ENCODE measurements at regions of chr11 and their contacts with region 1.

Region 1: GRCh38 chr11:363948-364761 is 5.1 kb upstream of the B4GALNT4 start:
- DNase-seq: peak; percentile 75
- H3K4me3 ChIP-seq: no peak overlapping the region
- H3K27ac ChIP-seq: no peak overlapping the region
- H3K4me1 ChIP-seq: no peaks in the 10 kb centered on the region
- H3K27me3 ChIP-seq: peaks cover 11% of the 10 kb centered on the region
- CTCF ChIP-seq: peak; percentile 45

Region 2: GRCh38 chr11:236774-237767 is 127.1 kb before region 1 on chr11 and contains the start of gene PSMD13:
- intact Hi-C with region 1: loop called (anchors 5 kb)
- DNase-seq: peak; percentile 87
- H3K4me3 ChIP-seq: peak within 1 kb of the TSS; percentile 96
- H3K27ac ChIP-seq: peak within 1 kb of the TSS; percentile 95
- H3K4me1 ChIP-seq: peaks cover 7% of the 10 kb centered on the region
- H3K27me3 ChIP-seq: no peaks in the 10 kb centered on the region
- CTCF ChIP-seq: no peak
- total RNA-seq, gene PSMD13: 99.0 to 145 TPM

Region 3: DNA sequence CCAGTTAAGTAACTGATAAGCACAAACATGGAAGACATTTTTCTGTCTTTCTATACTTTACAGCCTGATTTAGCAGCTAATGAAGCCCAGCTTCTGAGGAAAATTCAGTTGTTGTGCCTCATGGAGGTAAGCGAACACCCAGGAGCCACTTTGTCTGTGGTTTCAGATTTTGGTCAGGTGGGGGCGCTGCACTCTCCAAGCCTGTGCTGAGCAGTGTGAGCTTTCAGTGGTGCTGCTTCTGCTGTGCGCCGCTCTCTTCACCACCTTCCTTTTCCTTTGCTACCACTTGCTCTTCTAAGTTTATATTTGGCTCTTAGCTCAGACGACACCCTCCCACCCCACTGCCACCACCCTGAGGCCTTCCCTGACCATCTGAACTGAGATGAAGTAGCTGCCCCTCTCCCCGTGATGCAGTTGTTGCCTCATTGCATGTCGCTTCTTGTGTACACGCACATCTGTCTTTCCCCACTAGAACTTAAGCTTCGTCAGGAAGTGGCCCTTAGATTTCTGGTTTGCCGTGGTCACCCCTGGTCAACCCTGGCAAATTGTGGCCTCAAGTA is 113.3 kb before region 1 on chr11:
- intact Hi-C with region 1: loop called (anchors 5 kb)
- DNase-seq: peak; percentile 64
- H3K4me3 ChIP-seq: no peak overlapping the region
- H3K27ac ChIP-seq: no peak overlapping the region
- H3K4me1 ChIP-seq: no peaks in the 10 kb centered on the region
- H3K27me3 ChIP-seq: no peaks in the 10 kb centered on the region
- CTCF ChIP-seq: peak; percentile 60

Region 4: GRCh38 chr11:416757-417621 is 52.8 kb after region 1 on chr11:
- intact Hi-C with region 1: no loop called
- DNase-seq: peak; percentile 78
- H3K4me3 ChIP-seq: peak overlapping the region; percentile 70
- H3K27ac ChIP-seq: peak overlapping the region; percentile 90
- H3K4me1 ChIP-seq: peaks cover 5% of the 10 kb centered on the region
- H3K27me3 ChIP-seq: no peaks in the 10 kb centered on the region
- CTCF ChIP-seq: no peak

Measured in colonic mucosa (tissue), 4 donors.